Activated CD8-positive, alpha-beta T cell treated with anti-CD3 and anti-CD28 coated beads, Interleukin-2, amount 10 ng/mL, durations not matched to agents 7 days and 5 days (primary cell): ENCODE measurements at regions of chr11 and their contacts with region 1.

Region 1: DNA sequence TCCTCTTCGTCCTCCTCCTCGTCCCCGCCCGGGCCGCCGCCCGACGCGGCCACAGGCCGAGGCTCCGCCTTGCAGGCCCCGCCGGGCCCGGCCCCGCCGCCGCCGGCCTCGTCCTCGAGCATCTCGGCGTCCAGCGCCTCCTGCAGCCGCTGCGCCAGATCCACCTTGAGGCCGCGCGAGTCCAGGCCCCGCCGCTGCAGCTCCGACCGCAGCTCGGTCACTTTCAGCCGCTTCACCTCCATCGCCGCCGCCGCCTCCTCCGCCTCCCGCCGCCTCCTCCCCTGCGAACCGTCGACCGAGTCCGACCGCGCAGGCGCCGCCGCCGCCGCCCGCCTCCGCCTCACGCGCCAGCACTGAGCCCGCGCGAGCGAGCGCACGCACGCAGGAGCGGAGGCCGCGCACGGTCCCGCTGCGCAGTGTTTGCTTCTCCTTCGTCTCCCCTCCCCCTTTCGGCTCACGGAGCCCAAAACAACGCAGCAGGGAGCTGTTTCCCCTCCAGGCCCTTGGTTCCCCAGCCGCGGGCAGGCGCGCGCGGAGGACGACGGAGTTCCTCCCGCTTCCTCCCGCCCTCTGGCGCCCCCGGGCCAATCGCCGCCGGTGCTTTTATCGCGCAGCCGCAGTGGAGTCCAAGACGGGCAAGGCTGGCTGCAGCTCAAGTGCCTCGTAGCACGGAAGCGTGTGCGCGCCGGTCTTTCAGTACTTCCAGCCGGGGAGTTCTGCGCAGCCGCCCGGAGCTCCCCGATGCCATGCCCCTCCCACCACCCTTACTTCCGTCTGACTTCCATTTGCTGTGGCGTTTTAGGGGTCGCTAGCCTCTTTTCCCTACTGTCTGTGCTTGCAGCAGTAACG is at the start of gene HNRNPUL2:
- DNase-seq: peak; percentile 99
- ATAC-seq: peak; percentile 87
- H3K4me3 Mint-ChIP-seq: peak within 1 kb of the TSS; percentile 94
- H3K27ac Mint-ChIP-seq: peak within 1 kb of the TSS; percentile 96
- H3K4me1 Mint-ChIP-seq: peaks cover 47% of the 10 kb centered on the region
- H3K27me3 Mint-ChIP-seq: no peaks in the 10 kb centered on the region
- total RNA-seq, gene HNRNPUL2: 65.4 to 67.0 TPM

Region 2: GRCh38 chr11:62671575-62672389 is 55.4 kb before region 1 on chr11 and contains the starts of genes LBHD1 and UQCC3:
- CTCF ChIA-PET with region 1: interaction called, 3 read pairs
- POLR2A ChIA-PET with region 1: interaction called, 11 read pairs
- DNase-seq: peak; percentile 81
- ATAC-seq: peak; percentile 85
- H3K4me3 Mint-ChIP-seq: peak within 1 kb of the TSS; percentile 99
- H3K27ac Mint-ChIP-seq: peak within 1 kb of the TSS; percentile 99
- H3K4me1 Mint-ChIP-seq: peaks cover 67% of the 10 kb centered on the region
- H3K27me3 Mint-ChIP-seq: no peaks in the 10 kb centered on the region
- total RNA-seq, gene LBHD1: 22.3 to 25.0 TPM
- total RNA-seq, gene UQCC3: 7.5 TPM

Region 3: DNA sequence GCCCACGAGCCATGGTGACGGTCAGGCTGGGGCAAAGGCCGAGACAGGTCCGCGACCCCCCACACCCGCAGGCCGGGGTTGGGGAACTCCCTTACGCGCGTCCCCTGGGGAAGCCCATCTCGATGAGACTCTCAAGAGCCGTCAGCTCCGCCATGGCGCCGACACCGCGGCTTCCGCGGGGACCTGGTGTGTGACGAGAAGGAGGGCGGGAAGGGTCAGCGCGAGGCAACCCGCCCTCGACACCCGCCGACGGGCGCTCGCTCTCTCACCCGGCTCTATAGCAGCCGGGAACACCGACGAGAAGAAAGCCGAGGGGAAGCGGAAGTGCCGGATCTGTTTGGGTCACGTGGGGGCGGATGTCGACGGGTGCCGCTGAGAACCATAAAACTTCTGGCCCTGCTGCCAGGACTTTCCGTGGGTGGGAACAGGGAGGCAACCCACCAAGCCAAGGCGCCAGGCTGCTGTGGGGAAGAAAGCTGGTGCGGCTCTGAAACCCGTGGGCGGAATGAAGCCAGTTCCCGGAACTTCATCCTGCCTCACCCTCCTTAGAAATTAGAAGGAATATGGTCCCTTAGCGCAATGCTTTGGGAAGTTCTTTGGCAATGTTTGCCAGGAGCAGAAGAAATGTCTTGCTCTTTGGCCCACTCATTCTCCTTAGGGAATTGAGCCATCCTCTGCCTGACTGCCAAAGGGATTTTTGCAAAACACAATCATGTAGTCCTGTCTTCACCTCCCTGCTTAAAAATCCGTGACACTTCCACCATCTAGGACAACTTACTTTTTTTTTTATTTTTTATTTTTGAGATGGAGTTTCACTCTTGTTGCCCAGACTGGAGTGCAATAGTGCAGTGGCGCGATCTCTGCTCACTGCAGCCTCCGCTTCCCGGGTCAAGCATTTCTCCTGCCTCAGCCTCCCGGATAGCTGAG is 48.1 kb before region 1 on chr11 and contains the start of gene UBXN1:
- CTCF ChIA-PET with region 1: interaction called, 12 read pairs
- POLR2A ChIA-PET with region 1: no interaction called
- DNase-seq: peak; percentile 89
- ATAC-seq: peak; percentile 88
- H3K4me3 Mint-ChIP-seq: peak within 1 kb of the TSS; percentile 92
- H3K27ac Mint-ChIP-seq: peak within 1 kb of the TSS; percentile 87
- H3K4me1 Mint-ChIP-seq: peaks cover 42% of the 10 kb centered on the region
- H3K27me3 Mint-ChIP-seq: no peaks in the 10 kb centered on the region
- total RNA-seq, gene UBXN1: 107 to 118 TPM

Region 4: GRCh38 chr11:62705880-62706849 is 21.0 kb before region 1 on chr11:
- CTCF ChIA-PET with region 1: interaction called, 5 read pairs
- POLR2A ChIA-PET with region 1: interaction called, 123 read pairs
- DNase-seq: peak; percentile 95
- ATAC-seq: peak; percentile 67
- H3K4me3 Mint-ChIP-seq: peak overlapping the region; percentile 90
- H3K27ac Mint-ChIP-seq: peak overlapping the region; percentile 83
- H3K4me1 Mint-ChIP-seq: peaks cover 49% of the 10 kb centered on the region
- H3K27me3 Mint-ChIP-seq: no peaks in the 10 kb centered on the region

Region 5: GRCh38 chr11:62753736-62754603 is 26.8 kb after region 1 on chr11 and contains the start of gene ZBTB3:
- CTCF ChIA-PET with region 1: interaction called, 14 read pairs
- POLR2A ChIA-PET with region 1: interaction called, 37 read pairs
- DNase-seq: peak; percentile 99
- ATAC-seq: peak; percentile 99
- H3K4me3 Mint-ChIP-seq: peak within 1 kb of the TSS; percentile 94
- H3K27ac Mint-ChIP-seq: peak within 1 kb of the TSS; percentile 97
- H3K4me1 Mint-ChIP-seq: peaks cover 31% of the 10 kb centered on the region
- H3K27me3 Mint-ChIP-seq: no peaks in the 10 kb centered on the region
- total RNA-seq, gene ZBTB3: 12.4 to 12.8 TPM

Region 6: DNA sequence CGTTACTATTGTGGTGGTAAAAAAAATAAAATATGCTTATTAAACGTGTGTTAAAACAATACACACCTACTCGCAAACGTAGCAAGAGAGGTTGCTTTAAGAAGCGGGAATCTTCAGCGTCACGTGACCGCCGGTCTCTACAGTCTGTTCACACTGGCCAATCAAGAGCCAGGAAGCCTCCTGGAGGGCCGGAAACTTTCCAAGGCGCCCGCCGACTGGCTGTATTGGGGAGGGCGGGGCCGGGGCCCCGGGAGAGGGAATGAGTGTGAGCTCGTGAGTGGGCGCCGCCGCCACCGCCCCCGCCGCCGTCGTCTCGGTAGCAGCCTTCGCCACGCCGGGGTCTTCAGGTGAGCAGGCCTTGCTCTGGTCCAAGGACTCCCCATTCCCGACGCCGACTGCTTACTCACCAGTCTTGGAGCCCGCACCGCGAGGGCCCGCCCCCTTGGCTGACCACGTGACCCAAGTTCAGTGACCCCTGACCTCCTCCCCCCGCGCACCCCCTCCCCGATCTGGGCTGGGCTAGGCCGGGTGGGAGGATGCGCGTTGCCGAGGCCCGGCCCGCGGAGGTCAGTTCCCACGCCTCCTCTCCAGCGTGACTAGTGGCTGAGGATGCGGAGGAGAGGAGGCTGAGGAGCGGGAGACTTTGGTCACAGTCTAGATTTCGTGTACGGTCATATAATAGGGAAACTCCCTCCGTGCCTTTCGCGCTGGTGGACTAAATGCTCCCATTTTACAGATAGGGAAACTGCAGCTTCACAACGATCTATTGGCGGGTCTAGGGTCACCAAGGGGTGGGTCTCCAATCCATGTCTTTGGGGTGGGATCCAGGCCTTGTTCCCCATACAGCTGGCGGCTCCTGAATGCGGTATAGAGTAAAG is 44.2 kb after region 1 on chr11 and contains the start of gene TAF6L:
- CTCF ChIA-PET with region 1: interaction called, 10 read pairs
- POLR2A ChIA-PET with region 1: interaction called, 4 read pairs
- DNase-seq: peak; percentile 96
- ATAC-seq: peak; percentile 91
- H3K4me3 Mint-ChIP-seq: peak within 1 kb of the TSS; percentile 91
- H3K27ac Mint-ChIP-seq: peak within 1 kb of the TSS; percentile 93
- H3K4me1 Mint-ChIP-seq: peaks cover 27% of the 10 kb centered on the region
- H3K27me3 Mint-ChIP-seq: no peaks in the 10 kb centered on the region
- total RNA-seq, gene TAF6L: 21.8 to 23.7 TPM